Right lobe of liver (tissue), 6 donors: ENCODE measurements at regions of chr3 and their contacts with region 1.

Region 1: GRCh38 chr3:153038779-153039178 is 123.2 kb upstream of the RAP2B start:
- DNase-seq: peak in 1 of 3 donors; percentile 43
- ATAC-seq: peak in 1 of 4 donors; percentile 64
- H3K4me3 ChIP-seq: no peak overlapping the region
- H3K27ac ChIP-seq: no peak overlapping the region
- H3K4me1 ChIP-seq: no peaks in the 10 kb centered on the region
- H3K27me3 ChIP-seq: no peaks in the 10 kb centered on the region
- CTCF ChIP-seq: no peak
- POLR2A ChIP-seq: no peak

Region 2: DNA sequence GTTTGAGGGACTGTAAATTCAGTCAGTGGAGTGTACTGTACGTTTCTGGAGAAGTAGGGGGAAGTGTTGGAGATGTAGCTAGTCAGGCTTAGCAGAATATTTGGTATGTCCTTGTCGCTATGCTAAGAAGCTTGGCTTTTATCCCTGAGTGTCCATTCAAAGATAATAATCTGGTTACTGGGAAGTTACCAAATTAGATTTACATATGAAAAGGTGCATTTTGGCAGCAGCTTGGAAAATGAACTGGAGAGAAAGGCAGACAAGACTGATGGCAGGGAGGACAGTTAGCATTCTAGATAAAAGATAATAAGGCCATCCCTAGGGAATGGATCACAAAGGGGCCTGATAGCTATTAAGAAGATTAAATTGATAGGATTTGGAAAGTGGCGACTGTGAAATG is 145.1 kb before region 1 on chr3:
- intact Hi-C with region 1: no loop called
- DNase-seq: no peak
- ATAC-seq: no peak
- H3K4me3 ChIP-seq: no peak overlapping the region
- H3K27ac ChIP-seq: no peak overlapping the region
- H3K4me1 ChIP-seq: no peaks in the 10 kb centered on the region
- H3K27me3 ChIP-seq: no peaks in the 10 kb centered on the region
- CTCF ChIP-seq: no peak
- POLR2A ChIP-seq: no peak

Region 3: GRCh38 chr3:152969561-152970240 is 69.1 kb before region 1 on chr3:
- intact Hi-C with region 1: no loop called
- DNase-seq: no peak
- ATAC-seq: no peak
- H3K4me3 ChIP-seq: no peak overlapping the region
- H3K27ac ChIP-seq: no peak overlapping the region
- H3K4me1 ChIP-seq: no peaks in the 10 kb centered on the region
- H3K27me3 ChIP-seq: no peaks in the 10 kb centered on the region
- CTCF ChIP-seq: no peak
- POLR2A ChIP-seq: no peak

Region 4: DNA sequence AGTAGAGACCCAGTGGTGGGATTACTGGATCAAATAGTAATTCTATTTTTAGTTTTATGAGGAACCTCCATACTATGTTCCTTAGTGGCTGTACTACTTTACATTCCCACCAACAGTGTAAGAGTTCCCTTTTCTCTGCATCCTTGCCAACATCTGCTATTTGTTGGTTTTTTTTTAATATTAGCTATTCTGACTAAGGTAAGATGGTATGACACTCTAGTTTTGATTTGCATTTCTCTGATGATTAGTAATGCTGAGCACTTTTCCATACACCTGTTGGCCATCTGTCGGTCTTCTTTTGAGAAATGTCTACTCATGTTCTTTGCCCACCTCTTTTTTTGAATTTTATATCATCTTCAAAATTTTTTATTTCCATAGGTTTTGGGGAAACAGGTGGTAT is 89.0 kb after region 1 on chr3:
- intact Hi-C with region 1: no loop called
- DNase-seq: no peak
- ATAC-seq: no peak
- H3K4me3 ChIP-seq: no peak overlapping the region
- H3K27ac ChIP-seq: no peak overlapping the region
- H3K4me1 ChIP-seq: no peaks in the 10 kb centered on the region
- H3K27me3 ChIP-seq: no peaks in the 10 kb centered on the region
- CTCF ChIP-seq: no peak
- POLR2A ChIP-seq: no peak

Region 5: DNA sequence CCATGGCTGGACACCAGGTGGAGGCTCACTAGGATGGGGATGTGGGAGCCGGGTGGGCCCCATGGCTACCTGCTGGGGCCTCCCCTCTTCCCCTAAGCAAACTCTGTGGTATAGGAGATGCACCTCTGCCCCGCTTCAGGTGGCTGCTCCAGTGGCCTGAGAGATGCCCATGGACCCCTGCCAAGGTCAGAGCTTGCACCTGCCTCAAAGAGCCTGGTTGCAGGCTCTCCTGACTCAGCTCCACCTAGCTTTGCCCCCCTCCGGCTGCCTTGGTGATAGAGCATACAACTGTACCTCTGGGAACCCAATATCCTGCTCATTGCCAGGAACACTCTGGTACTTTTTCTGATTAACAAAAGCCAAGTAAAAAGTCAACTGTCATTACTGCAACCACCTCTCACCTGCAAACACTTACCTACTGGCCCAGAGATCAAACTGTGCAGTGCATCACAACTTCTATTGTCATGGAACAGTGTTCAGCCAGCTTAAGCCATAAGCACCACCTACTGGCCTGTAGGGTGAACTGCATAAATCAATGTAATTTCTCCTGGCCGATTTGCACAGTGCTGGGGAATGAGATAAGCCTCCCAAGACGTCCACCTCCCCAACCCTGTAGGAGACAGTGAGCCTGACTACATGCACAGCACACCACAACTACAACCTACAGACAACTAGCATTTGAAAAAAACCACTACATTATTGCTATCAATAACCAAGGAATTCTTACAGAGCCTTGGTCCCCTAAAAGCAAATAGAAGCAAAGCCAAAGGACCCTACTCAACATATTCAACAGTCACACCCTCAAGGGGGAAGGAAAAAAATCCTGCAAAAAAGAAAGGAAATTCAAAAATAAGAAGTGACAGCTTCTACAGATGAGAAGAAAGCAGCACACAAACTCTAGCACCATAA is 730.0 kb after region 1 on chr3:
- intact Hi-C with region 1: loop called in 1 of 2 experiments (anchors 10 kb)
- DNase-seq: peak in 1 of 3 donors; percentile 20
- ATAC-seq: peak; percentile 95 to 98 (median 97)
- H3K4me3 ChIP-seq: no peak overlapping the region
- H3K27ac ChIP-seq: no peak overlapping the region
- H3K4me1 ChIP-seq: no peaks in the 10 kb centered on the region
- H3K27me3 ChIP-seq: no peaks in the 10 kb centered on the region
- CTCF ChIP-seq: peak; percentile 81 to 86 (median 84)
- POLR2A ChIP-seq: no peak